Ascending aorta (tissue), 2 donors: ENCODE measurements at regions of chr20 and their contacts with region 1.

Region 1: GRCh38 chr20:37297066-37297736 is 7.7 kb downstream of the MANBAL start:
- DNase-seq: peak in 1 of 2 donors; percentile 87
- H3K4me3 ChIP-seq: peak overlapping the region; percentile 1 to 7
- H3K27ac ChIP-seq: peak overlapping the region; percentile 86 to 92
- H3K4me1 ChIP-seq: peaks cover 14 to 56% of the 10 kb centered on the region in 2 donors
- H3K27me3 ChIP-seq: no peaks in the 10 kb centered on the region
- CTCF ChIP-seq: no peak

Region 2: DNA sequence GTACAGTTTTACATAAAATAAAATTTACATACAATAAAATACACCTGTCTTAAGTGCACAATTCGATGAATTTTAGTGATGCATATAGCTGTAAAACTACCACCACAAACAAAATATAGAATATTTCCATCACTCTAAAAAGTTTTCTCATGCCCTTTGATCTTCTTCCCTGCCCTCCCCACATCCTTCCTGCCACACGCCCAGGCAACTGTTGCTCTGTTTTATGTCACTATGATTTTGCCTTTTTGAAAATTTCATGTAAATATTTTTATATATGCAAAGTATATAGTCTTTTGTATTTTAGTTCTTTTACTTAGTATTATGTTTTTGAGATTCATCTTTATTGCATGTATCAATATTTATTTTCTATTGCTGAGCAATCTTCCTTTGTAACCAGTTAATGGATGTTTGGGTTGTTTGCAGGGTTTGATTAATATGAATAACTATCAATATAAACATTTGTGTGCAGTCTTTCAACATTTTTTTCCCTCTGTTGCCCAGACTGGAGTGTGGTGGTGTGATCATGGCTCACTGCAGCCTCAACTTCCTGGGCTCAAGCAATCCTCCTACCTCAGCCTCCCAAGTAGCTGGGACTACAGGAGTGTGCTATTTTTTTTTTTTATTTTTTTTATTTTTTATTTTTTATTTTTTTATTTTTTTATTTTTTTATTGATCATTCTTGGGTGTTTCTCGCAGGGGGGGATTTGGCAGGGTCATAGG is 321.9 kb before region 1 on chr20:
- intact Hi-C with region 1: no loop called
- DNase-seq: no peak
- H3K4me3 ChIP-seq: no peak overlapping the region
- H3K27ac ChIP-seq: no peak overlapping the region
- H3K4me1 ChIP-seq: no peaks in the 10 kb centered on the region
- H3K27me3 ChIP-seq: no peaks in the 10 kb centered on the region
- CTCF ChIP-seq: no peak

Region 3: DNA sequence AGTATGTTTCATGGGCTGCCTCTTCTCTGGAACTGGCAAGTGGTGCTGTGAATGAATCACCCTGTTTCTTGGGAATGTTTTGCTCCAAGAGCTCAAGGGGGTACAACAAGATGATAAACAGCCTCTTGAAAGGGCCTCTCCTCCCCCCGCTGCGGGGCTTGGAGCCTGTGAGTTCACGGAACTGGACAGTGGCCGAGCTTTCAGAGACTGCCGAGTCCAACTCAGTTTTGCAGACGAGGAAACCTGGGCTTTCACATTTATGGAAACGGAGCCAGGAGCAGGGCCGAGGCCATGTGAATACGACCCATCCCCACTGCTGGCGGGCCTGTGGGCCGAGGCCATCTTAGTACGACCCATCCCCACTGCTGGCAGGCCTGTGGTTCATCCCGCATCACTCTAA is 30.5 kb after region 1 on chr20:
- intact Hi-C with region 1: loop called (anchors 2 kb)
- DNase-seq: peak; percentile 80 to 96
- H3K4me3 ChIP-seq: no peak overlapping the region
- H3K27ac ChIP-seq: peak overlapping the region; percentile 64 to 74
- H3K4me1 ChIP-seq: peaks cover 0 to 21% of the 10 kb centered on the region in 2 donors
- H3K27me3 ChIP-seq: no peaks in the 10 kb centered on the region
- CTCF ChIP-seq: no peak

Region 4: GRCh38 chr20:37345339-37346230 is 48.4 kb after region 1 on chr20 and contains the start of gene SRC:
- intact Hi-C with region 1: loop called (anchors 2 kb)
- DNase-seq: peak in 1 of 2 donors; percentile 90
- H3K4me3 ChIP-seq: peak within 1 kb of the TSS; percentile 83 to 94
- H3K27ac ChIP-seq: peak within 1 kb of the TSS; percentile 95 to 97
- H3K4me1 ChIP-seq: peaks cover 13 to 39% of the 10 kb centered on the region in 2 donors
- H3K27me3 ChIP-seq: no peaks in the 10 kb centered on the region
- CTCF ChIP-seq: no peak
- total RNA-seq, gene SRC: 67.4 TPM

Region 5: GRCh38 chr20:37356387-37356786 is 59.2 kb after region 1 on chr20:
- intact Hi-C with region 1: loop called (anchors 2 kb)
- DNase-seq: peak; percentile 57 to 93
- H3K4me3 ChIP-seq: peak overlapping the region in 1 of 2 donors; percentile 4
- H3K27ac ChIP-seq: peak overlapping the region; percentile 73 to 88
- H3K4me1 ChIP-seq: peaks cover 9 to 55% of the 10 kb centered on the region in 2 donors
- H3K27me3 ChIP-seq: no peaks in the 10 kb centered on the region
- CTCF ChIP-seq: peak in 1 of 3 experiments; percentile 4